Naive thymus-derived CD4-positive, alpha-beta T cell (primary cell): ENCODE measurements at regions of chr5 and their contacts with region 1.

Region 1: GRCh38 chr5:35852084-35852734 is 4.5 kb upstream of the IL7R start:
- DNase-seq: peak in 6 of 9 donors; percentile 42 to 74 (median 56)
- ATAC-seq: no peak
- H3K4me3 ChIP-seq: peak overlapping the region; percentile 55
- H3K4me3 Mint-ChIP-seq: peak overlapping the region; percentile 85 to 100 (median 92)
- H3K27ac ChIP-seq: peak overlapping the region; percentile 98
- H3K27ac Mint-ChIP-seq: peak overlapping the region; percentile 97 to 100 (median 99)
- H3K4me1 ChIP-seq: peaks cover 52 to 56% of the 10 kb centered on the region in 2 donors
- H3K4me1 Mint-ChIP-seq: peaks cover 31 to 89% (median 72%) of the 10 kb centered on the region in 7 donors
- H3K27me3 ChIP-seq: no peaks in the 10 kb centered on the region
- H3K27me3 Mint-ChIP-seq: no peaks in the 10 kb centered on the region

Region 2: GRCh38 chr5:35617435-35618303 is 234.5 kb before region 1 on chr5 and contains the start of gene SPEF2:
- CTCF ChIA-PET with region 1: interaction called, 3 read pairs
- POLR2A ChIA-PET with region 1: no interaction called
- intact Hi-C with region 1: loop called (anchors 1 to 2 kb)
- DNase-seq: peak; percentile 57 to 76 (median 71)
- ATAC-seq: peak; percentile 95
- H3K4me3 ChIP-seq: peak within 1 kb of the TSS; percentile 95
- H3K4me3 Mint-ChIP-seq: peak within 1 kb of the TSS; percentile 91 to 96 (median 94)
- H3K27ac ChIP-seq: peak within 1 kb of the TSS; percentile 27
- H3K27ac Mint-ChIP-seq: peak within 1 kb of the TSS; percentile 79 to 96 (median 89)
- H3K4me1 ChIP-seq: peaks cover 4 to 12% of the 10 kb centered on the region in 2 donors
- H3K4me1 Mint-ChIP-seq: peaks cover 14 to 34% (median 26%) of the 10 kb centered on the region in 7 donors
- H3K27me3 ChIP-seq: no peaks in the 10 kb centered on the region
- H3K27me3 Mint-ChIP-seq: no peaks in the 10 kb centered on the region
- total RNA-seq, gene SPEF2: 7.1 to 13.5 (median 9.9) TPM

Region 3: DNA sequence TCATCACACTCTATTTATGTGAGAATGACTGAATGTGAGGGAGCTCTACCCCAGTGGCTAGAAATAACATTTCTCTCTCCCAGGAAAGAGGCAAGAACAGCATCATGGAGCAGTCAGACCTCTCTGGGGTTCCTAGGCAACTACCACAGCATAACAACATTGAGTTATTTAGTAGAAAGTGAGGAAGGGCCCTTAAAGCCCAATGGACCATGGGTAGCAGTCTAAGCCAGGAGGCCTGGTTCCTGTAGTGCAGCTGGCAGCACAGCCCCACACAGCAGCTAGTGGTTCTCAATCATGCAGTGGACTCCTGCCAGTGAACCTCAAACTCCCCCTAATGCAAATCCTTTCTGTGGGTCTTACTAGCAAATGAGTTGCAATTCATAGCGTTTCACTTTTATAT is 179.2 kb before region 1 on chr5:
- CTCF ChIA-PET with region 1: interaction called, 3 read pairs
- POLR2A ChIA-PET with region 1: interaction called, 10 read pairs
- intact Hi-C with region 1: loop called (anchors 1 kb)
- DNase-seq: peak in 8 of 9 donors; percentile 30 to 68 (median 52)
- ATAC-seq: peak; percentile 88
- H3K4me3 ChIP-seq: peak overlapping the region; percentile 14
- H3K4me3 Mint-ChIP-seq: peak overlapping the region in 9 of 10 donors; percentile 47 to 81 (median 66)
- H3K27ac ChIP-seq: peak overlapping the region; percentile 62
- H3K27ac Mint-ChIP-seq: peak overlapping the region; percentile 87 to 96 (median 92)
- H3K4me1 ChIP-seq: peaks cover 36 to 41% of the 10 kb centered on the region in 2 donors
- H3K4me1 Mint-ChIP-seq: peaks cover 20 to 88% (median 75%) of the 10 kb centered on the region in 7 donors
- H3K27me3 ChIP-seq: no peaks in the 10 kb centered on the region
- H3K27me3 Mint-ChIP-seq: no peaks in the 10 kb centered on the region

Region 4: GRCh38 chr5:35822511-35822910 is 29.7 kb before region 1 on chr5:
- CTCF ChIA-PET with region 1: interaction called, 15 read pairs
- POLR2A ChIA-PET with region 1: interaction called, 1,069 read pairs
- intact Hi-C with region 1: loop called (anchors 1 kb)
- DNase-seq: peak in 7 of 9 donors; percentile 49 to 83 (median 76)
- ATAC-seq: peak; percentile 82
- H3K4me3 ChIP-seq: peak overlapping the region; percentile 7
- H3K4me3 Mint-ChIP-seq: peak overlapping the region; percentile 38 to 75 (median 70)
- H3K27ac ChIP-seq: peak overlapping the region; percentile 62
- H3K27ac Mint-ChIP-seq: peak overlapping the region; percentile 84 to 98 (median 95)
- H3K4me1 ChIP-seq: peaks cover 91 to 92% of the 10 kb centered on the region in 2 donors
- H3K4me1 Mint-ChIP-seq: peaks cover 55 to 94% (median 88%) of the 10 kb centered on the region in 7 donors
- H3K27me3 ChIP-seq: no peaks in the 10 kb centered on the region
- H3K27me3 Mint-ChIP-seq: no peaks in the 10 kb centered on the region

Region 5: GRCh38 chr5:35869685-35870277 is 17.6 kb after region 1 on chr5:
- CTCF ChIA-PET with region 1: no interaction called
- POLR2A ChIA-PET with region 1: interaction called, 357 read pairs
- intact Hi-C with region 1: loop called in 1 of 2 experiments (anchors 2 kb)
- DNase-seq: no peak
- ATAC-seq: no peak
- H3K4me3 ChIP-seq: no peak overlapping the region
- H3K4me3 Mint-ChIP-seq: peak overlapping the region in 7 of 10 donors; percentile 44 to 87 (median 51)
- H3K27ac ChIP-seq: peak overlapping the region; percentile 65
- H3K27ac Mint-ChIP-seq: peak overlapping the region; percentile 47 to 97 (median 86)
- H3K4me1 ChIP-seq: peaks cover 41 to 54% of the 10 kb centered on the region in 2 donors
- H3K4me1 Mint-ChIP-seq: peaks cover 46 to 99% (median 93%) of the 10 kb centered on the region in 7 donors
- H3K27me3 ChIP-seq: no peaks in the 10 kb centered on the region
- H3K27me3 Mint-ChIP-seq: no peaks in the 10 kb centered on the region

Region 6: DNA sequence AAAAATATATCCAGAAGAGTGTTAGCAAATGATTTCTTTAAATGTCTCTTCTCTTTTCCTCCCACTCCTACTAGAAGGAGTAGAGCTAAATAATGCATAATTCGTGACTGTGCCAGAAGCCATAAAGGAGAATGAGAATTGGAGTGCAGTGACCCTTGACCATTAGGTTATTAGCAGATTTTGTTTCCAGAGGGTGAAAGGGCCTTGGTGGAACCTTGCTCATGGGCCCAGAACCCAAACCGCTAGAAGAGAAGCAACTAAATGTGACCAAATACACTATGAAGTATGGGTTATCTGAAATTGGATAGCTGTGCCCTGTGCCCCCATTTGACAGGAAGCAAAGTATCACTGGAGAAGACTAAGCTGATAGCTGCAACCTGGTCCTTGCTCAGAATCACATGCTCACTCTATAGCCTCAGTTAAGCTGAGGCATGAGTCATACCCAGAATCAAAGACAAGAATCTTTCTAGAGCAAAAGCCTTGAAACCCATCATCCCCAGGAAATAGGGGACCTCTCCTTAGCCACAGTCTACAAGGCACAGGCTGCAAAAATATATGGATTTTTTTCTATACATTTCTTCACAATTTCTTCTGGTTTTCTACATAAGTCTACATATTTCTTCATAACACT is 50.0 kb after region 1 on chr5:
- CTCF ChIA-PET with region 1: no interaction called
- POLR2A ChIA-PET with region 1: interaction called, 5 read pairs
- intact Hi-C with region 1: loop called in 1 of 2 experiments (anchors 1 kb)
- DNase-seq: no peak
- ATAC-seq: peak; percentile 48
- H3K4me3 ChIP-seq: no peak overlapping the region
- H3K4me3 Mint-ChIP-seq: peak overlapping the region in 1 of 10 donors; percentile 57
- H3K27ac ChIP-seq: no peak overlapping the region
- H3K27ac Mint-ChIP-seq: peak overlapping the region in 2 of 9 donors; percentile 25 to 40
- H3K4me1 ChIP-seq: peaks cover 10 to 12% of the 10 kb centered on the region in 2 donors
- H3K4me1 Mint-ChIP-seq: peaks cover 28 to 76% (median 63%) of the 10 kb centered on the region in 7 donors
- H3K27me3 ChIP-seq: no peaks in the 10 kb centered on the region
- H3K27me3 Mint-ChIP-seq: no peaks in the 10 kb centered on the region